Uterus (tissue), 4 donors: ENCODE measurements at regions of chr7 and their contacts with region 1.

Region 1: DNA sequence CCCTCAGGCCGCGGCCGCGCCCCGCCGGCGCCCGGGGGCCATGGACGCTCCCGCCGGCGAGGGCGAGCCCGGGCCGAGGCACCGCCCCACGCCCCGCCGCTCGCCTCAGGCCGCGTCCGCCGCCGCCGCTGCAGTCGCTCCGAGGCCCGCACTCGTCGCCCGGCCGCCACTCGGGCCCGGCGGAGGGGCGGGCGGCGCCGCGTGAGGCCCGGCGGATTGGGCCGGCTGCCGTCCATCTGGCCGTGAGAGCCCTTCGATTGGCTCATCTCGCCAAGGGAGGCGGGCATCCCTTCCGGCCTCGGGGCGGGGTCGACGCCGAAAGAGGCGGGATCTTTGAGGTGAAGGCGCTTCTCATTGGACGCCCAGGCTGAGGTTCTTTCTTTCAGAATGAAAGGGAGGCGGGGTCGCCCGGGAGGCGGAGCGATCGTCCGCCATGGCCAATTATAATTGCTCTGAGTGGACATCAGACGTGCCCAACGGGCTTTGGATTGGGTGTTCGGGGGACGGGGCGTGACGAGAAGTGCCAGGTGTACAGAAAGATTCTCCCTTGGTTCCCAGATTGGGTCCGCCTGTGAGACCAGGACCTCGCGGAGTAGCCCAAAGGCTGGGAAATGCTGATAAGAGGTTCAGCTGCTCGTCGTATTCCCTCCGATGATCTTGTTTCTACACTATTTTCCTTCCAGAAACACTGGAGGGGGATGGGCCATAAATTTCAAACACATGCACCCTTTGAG is at the start of gene GNA12:
- DNase-seq: peak; percentile 98 to 99
- H3K4me3 ChIP-seq: peak within 1 kb of the TSS; percentile 33 to 67
- H3K27ac ChIP-seq: peak within 1 kb of the TSS; percentile 66 to 72
- H3K4me1 ChIP-seq: peaks cover 0 to 11% of the 10 kb centered on the region in 2 donors
- H3K27me3 ChIP-seq: no peaks in the 10 kb centered on the region
- CTCF ChIP-seq: no peak
- POLR2A ChIP-seq: peak; percentile 64 to 65
- total RNA-seq, gene GNA12: 20.5 to 109 (median 50.3) TPM

Region 2: DNA sequence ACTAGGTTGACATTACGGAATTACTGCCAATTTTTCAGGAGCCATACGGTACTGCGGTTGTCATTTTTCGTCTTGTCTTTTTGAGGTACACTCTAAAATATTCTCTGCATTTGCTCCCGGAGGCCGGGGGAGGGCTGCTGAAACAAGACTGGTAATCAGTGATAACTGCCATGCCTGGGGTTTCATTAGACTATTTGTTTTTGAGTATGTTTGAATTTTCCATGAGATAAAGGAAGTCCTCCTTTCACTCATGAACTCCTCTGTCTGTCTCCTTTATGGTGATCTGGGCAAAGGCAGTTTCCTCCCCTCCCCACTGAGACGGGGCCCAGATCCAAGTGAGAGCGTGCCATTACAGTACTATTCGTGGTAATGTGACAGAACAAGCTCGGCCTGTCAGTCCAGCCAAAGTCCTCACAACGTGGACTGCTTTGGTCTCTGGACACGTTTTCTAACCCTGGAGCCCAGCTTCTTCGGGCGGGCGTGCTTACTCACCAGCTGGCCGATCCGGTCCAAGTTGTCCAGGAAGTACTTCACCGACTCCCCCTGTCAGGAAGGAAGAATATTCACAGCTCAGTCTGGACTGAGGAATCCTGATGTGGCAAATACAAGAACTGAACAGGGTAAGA is 111.3 kb before region 1 on chr7:
- intact Hi-C with region 1: loop called (anchors 10 kb)
- DNase-seq: peak; percentile 69 to 74
- H3K4me3 ChIP-seq: no peak overlapping the region
- H3K27ac ChIP-seq: peak overlapping the region; percentile 58 to 59
- H3K4me1 ChIP-seq: peaks cover 0 to 9% of the 10 kb centered on the region in 2 donors
- H3K27me3 ChIP-seq: no peaks in the 10 kb centered on the region
- CTCF ChIP-seq: no peak
- POLR2A ChIP-seq: no peak